Caco-2 (cell line): ENCODE measurements at regions of chr10 and their contacts with region 1.

Region 1: GRCh38 chr10:77297393-77297739 is 340.2 kb downstream of the KCNMA1 start:
- DNase-seq: no peak
- H3K4me3 ChIP-seq: no peak overlapping the region
- H3K4me3 Mint-ChIP-seq: no peak overlapping the region
- H3K27ac Mint-ChIP-seq: peak overlapping the region; percentile 45
- H3K4me1 ChIP-seq: peaks cover 50% of the 10 kb centered on the region
- H3K4me1 Mint-ChIP-seq: peaks cover 20% of the 10 kb centered on the region
- H3K27me3 ChIP-seq: no peaks in the 10 kb centered on the region
- H3K27me3 Mint-ChIP-seq: no peaks in the 10 kb centered on the region
- CTCF ChIP-seq: no peak

Region 2: DNA sequence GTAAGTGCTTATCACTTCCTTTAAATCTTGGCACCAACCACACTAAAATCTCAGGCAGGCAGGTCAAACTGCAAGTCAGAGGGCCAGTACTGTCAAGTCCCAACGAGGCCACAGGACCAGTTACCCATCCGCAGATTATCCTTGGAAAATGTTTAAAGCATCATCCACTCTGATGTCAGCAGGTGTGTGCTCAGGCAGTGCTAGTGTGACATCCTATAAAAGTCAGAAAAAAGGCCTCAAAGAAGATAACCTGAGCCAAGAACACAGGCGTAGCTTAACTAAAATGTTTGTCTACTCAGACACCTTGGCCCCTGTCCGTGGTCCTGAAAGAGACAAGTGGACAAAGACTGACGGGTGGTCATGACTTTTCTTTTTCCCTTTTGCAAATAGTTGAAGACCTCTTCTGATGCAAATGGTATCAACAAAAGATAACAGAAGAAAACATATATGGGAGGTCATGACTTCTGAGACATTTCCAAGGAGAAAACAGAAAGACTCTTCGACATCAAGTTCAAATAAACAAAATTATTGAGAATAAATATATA is 31.0 kb after region 1 on chr10:
- CTCF ChIA-PET with region 1: interaction called, 3 read pairs
- POLR2A ChIA-PET with region 1: no interaction called
- intact Hi-C with region 1: loop called (anchors 1 kb)
- DNase-seq: peak; percentile 57 to 76
- H3K4me3 ChIP-seq: no peak overlapping the region
- H3K4me3 Mint-ChIP-seq: no peak overlapping the region
- H3K27ac Mint-ChIP-seq: no peak overlapping the region
- H3K4me1 ChIP-seq: peaks cover 22% of the 10 kb centered on the region
- H3K4me1 Mint-ChIP-seq: peaks cover 30% of the 10 kb centered on the region
- H3K27me3 ChIP-seq: no peaks in the 10 kb centered on the region
- H3K27me3 Mint-ChIP-seq: no peaks in the 10 kb centered on the region
- CTCF ChIP-seq: no peak

Region 3: DNA sequence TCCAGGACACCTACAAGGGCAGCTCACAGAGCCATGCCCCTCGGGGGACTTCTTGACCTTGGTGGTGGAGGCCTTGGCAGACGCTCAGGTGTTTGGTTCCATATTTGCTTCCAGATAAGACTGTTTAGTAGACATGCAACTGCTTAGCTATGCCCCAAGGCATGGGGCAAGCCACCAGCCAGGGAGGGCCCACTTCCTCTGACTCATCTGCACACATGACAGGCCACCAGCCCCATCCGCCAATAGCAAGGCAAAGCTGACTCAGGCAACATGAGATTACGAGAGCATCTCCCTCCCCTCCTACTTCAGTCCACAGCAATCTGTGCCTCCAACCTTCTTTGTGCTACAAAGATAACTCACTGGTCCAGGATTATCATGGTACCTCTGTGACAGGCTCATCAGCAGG is 285.3 kb after region 1 on chr10:
- CTCF ChIA-PET with region 1: no interaction called
- POLR2A ChIA-PET with region 1: no interaction called
- intact Hi-C with region 1: no loop called
- DNase-seq: peak; percentile 49 to 60
- H3K4me3 ChIP-seq: no peak overlapping the region
- H3K4me3 Mint-ChIP-seq: no peak overlapping the region
- H3K27ac Mint-ChIP-seq: no peak overlapping the region
- H3K4me1 ChIP-seq: peaks cover 25% of the 10 kb centered on the region; the same call in 1 of the 2 replicates
- H3K4me1 Mint-ChIP-seq: peaks cover 7% of the 10 kb centered on the region
- H3K27me3 ChIP-seq: no peaks in the 10 kb centered on the region
- H3K27me3 Mint-ChIP-seq: no peaks in the 10 kb centered on the region
- CTCF ChIP-seq: no peak